Common myeloid progenitor, CD34-positive (primary cell): ENCODE measurements at regions of chr3 and their contacts with region 1.

Region 1: GRCh38 chr3:107740992-107741896 is 218.5 kb downstream of the BBX start:
- DNase-seq: peak; percentile 39 to 67 (median 55)
- H3K4me3 ChIP-seq: no peak overlapping the region
- H3K27ac ChIP-seq: no peak overlapping the region
- H3K4me1 ChIP-seq: peaks cover 0 to 3% (median under 1%) of the 10 kb centered on the region in 4 experiments
- H3K27me3 ChIP-seq: no peaks in the 10 kb centered on the region

Region 2: GRCh38 chr3:107574650-107575049 is 166.6 kb before region 1 on chr3:
- CTCF ChIA-PET with region 1: interaction called, 23 read pairs
- POLR2A ChIA-PET with region 1: no interaction called
- DNase-seq: peak; percentile 24 to 41 (median 32)
- H3K4me3 ChIP-seq: no peak overlapping the region
- H3K27ac ChIP-seq: no peak overlapping the region
- H3K4me1 ChIP-seq: no peaks in the 10 kb centered on the region
- H3K27me3 ChIP-seq: no peaks in the 10 kb centered on the region

Region 3: DNA sequence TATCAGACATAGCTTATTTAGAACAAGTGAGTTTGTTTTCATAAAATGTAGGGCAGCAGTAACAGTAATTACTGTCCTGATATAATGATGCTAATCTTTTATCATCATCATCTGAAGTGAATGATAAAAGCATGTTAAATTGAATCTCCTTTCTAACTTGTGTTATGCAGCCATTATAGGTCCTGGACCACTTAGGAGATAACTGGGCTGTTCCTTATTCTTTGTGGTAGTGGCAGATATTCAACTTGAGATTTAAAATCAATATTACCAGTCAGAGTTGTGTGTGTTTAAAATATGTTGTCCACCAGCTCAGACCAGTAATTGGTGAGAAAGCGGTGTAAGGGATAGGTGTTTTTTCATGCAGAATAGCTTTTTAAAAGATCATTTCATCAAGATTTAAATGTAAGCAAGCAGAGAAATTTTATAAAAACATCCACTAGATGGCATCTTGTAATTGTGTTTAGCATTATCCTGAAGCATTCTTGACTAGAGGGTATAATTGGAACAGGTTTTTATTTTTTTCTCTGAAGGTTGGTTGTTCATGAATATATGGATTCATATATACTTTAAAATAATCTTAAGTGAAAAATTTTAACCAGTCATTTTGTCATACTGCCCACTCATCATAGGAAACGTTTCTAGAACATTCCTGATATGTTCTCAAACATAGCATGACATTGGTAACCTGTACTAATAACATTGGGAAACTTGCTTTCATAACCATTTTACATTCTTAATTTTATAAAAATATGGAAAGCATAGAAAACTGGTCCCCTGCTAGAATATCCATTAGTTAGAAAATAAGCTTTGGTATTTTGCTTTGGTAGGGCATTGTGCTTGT is 64.6 kb before region 1 on chr3:
- CTCF ChIA-PET with region 1: interaction called, 143 read pairs
- POLR2A ChIA-PET with region 1: no interaction called
- DNase-seq: peak; percentile 34 to 67 (median 61)
- H3K4me3 ChIP-seq: no peak overlapping the region
- H3K27ac ChIP-seq: no peak overlapping the region
- H3K4me1 ChIP-seq: peaks cover 9 to 17% (median 13%) of the 10 kb centered on the region in 4 experiments
- H3K27me3 ChIP-seq: no peaks in the 10 kb centered on the region

Region 4: GRCh38 chr3:107727102-107727501 is 14.1 kb before region 1 on chr3:
- CTCF ChIA-PET with region 1: interaction called, 30 read pairs
- POLR2A ChIA-PET with region 1: no interaction called
- DNase-seq: no peak
- H3K4me3 ChIP-seq: no peak overlapping the region
- H3K27ac ChIP-seq: no peak overlapping the region
- H3K4me1 ChIP-seq: no peaks in the 10 kb centered on the region
- H3K27me3 ChIP-seq: no peaks in the 10 kb centered on the region